ENCODE measurements at regions of chr17 and their contacts with region 1.

Region 1: GRCh38 chr17:65745241-65745640 is 183.8 kb upstream of the AXIN2 start:
- DNase-seq: no peak
- H3K4me3 ChIP-seq: no peak overlapping the region
- H3K27ac ChIP-seq: no peak overlapping the region
- H3K4me1 ChIP-seq: peaks cover 10% of the 10 kb centered on the region
- H3K27me3 ChIP-seq: no peaks in the 10 kb centered on the region
- CTCF ChIP-seq: no peak

Region 2: DNA sequence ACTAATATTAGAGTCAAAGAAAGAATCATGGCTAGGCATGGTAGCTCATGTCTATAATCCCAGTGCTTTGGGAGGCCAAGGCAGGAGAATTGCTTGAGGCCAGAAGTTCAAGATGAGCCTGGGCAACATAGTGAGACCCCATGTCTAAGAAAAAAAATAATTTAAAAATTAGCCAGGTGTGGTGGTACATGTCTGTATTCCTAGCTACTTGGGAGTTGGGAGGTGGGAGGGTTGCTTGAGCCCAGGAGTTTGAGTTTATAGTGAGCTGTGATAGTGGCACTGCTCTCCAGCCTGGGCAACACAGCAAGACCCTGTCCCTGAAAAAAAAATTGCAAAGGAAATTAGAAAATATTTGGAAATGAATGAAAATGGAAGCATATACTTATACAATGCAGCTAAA is 26.5 kb after region 1 on chr17:
- intact Hi-C with region 1: loop called (anchors 2 kb)
- DNase-seq: no peak
- H3K4me3 ChIP-seq: no peak overlapping the region
- H3K27ac ChIP-seq: no peak overlapping the region
- H3K4me1 ChIP-seq: peaks cover 11% of the 10 kb centered on the region
- H3K27me3 ChIP-seq: no peaks in the 10 kb centered on the region
- CTCF ChIP-seq: no peak

Region 3: GRCh38 chr17:65888649-65889048 is 143.4 kb after region 1 on chr17:
- intact Hi-C with region 1: no loop called
- DNase-seq: no peak
- H3K4me3 ChIP-seq: no peak overlapping the region
- H3K27ac ChIP-seq: no peak overlapping the region
- H3K4me1 ChIP-seq: no peaks in the 10 kb centered on the region
- H3K27me3 ChIP-seq: no peaks in the 10 kb centered on the region
- CTCF ChIP-seq: no peak

Measured in left ventricle myocardium inferior (tissue), 1 donor.